ENCODE measurements at regions of chr14 and their contacts with region 1.

Region 1: GRCh38 chr14:68663385-68664076 is 129.3 kb downstream of the ZFP36L1 start:
- DNase-seq: peak; percentile 77
- ATAC-seq: peak; percentile 93
- H3K4me3 ChIP-seq: peak overlapping the region; percentile 39; the same call in 1 of the 2 replicates
- H3K27ac ChIP-seq: peak overlapping the region; percentile 66
- H3K4me1 ChIP-seq: peaks cover 22% of the 10 kb centered on the region
- H3K27me3 ChIP-seq: no peaks in the 10 kb centered on the region
- CTCF ChIP-seq: no peak
- EP300 ChIP-seq: peak; percentile 89 to 98
- POLR2A ChIP-seq: no peak
- RAD21 ChIP-seq: peak; percentile 25; the same call in 1 of the 2 replicates

Region 2: GRCh38 chr14:68495101-68496039 is 168.2 kb before region 1 on chr14:
- CTCF ChIA-PET with region 1: no interaction called
- POLR2A ChIA-PET with region 1: no interaction called
- RAD21 ChIA-PET with region 1: interaction called, 3 read pairs
- SMC1A ChIA-PET with region 1: interaction called, 5 read pairs
- in situ Hi-C with region 1: no loop called
- intact Hi-C with region 1: loop called (anchors 5 kb)
- DNase-seq: peak; percentile 83
- ATAC-seq: peak; percentile 92
- H3K4me3 ChIP-seq: no peak overlapping the region
- H3K27ac ChIP-seq: peak overlapping the region; percentile 68
- H3K4me1 ChIP-seq: peaks cover 24% of the 10 kb centered on the region
- H3K27me3 ChIP-seq: no peaks in the 10 kb centered on the region
- CTCF ChIP-seq: no peak
- EP300 ChIP-seq: peak; percentile 71 to 87; a peak in 2 of 4 replicates
- POLR2A ChIP-seq: no peak
- RAD21 ChIP-seq: 0 out of 2 replicates have a peak, but pooled peaks have one; percentile 8

Region 3: DNA sequence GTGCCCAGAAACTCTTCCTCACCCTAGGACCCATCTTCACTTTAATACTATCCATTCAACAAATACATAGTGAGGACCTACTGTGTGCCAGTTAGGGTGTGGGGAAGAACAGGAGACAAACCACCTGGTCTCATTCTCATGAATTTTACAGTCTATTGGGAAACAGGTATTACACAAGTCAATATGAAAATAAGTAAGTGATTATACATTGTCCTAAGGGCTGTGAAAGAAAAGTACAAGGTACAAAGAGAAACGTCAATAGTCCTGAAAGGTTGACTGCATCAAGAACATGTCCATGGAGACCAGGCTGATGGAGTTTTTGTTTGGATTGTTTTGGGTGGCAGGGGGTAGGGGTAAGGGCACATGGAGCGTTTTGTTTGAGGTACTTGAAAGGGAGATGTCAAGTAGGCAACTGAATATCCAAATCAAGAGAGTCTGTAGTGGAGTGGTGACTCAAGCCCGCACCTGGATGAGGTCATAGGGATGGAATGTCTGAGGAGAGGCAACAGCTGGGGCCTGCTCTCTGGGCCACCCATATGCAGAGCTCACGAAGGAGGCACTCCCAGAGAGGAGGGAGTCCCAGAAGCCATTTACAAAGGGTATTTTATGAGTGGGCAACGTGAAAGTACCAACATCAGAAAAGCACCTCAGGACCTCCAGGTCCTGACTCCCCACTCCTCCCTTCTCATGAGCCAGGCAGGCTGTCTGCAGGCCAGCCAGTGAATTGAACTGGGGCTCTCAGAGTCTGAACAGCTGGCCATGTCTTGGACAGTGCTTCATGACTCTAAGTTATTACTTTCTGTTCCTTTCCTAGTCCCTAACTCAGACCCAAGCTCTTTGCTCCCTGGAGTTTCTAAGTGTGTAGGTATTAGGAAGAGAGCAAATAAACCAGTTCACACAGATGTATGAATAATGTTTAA is 142.6 kb before region 1 on chr14:
- CTCF ChIA-PET with region 1: no interaction called
- POLR2A ChIA-PET with region 1: no interaction called
- RAD21 ChIA-PET with region 1: no interaction called
- SMC1A ChIA-PET with region 1: interaction called, 15 read pairs
- in situ Hi-C with region 1: no loop called
- intact Hi-C with region 1: no loop called
- DNase-seq: no peak
- ATAC-seq: peak; percentile 44
- H3K4me3 ChIP-seq: no peak overlapping the region
- H3K27ac ChIP-seq: no peak overlapping the region
- H3K4me1 ChIP-seq: peaks cover 15% of the 10 kb centered on the region
- H3K27me3 ChIP-seq: no peaks in the 10 kb centered on the region
- CTCF ChIP-seq: no peak
- EP300 ChIP-seq: no peak
- POLR2A ChIP-seq: no peak
- RAD21 ChIP-seq: no peak

Region 4: GRCh38 chr14:68563246-68564131 is 100.0 kb before region 1 on chr14:
- CTCF ChIA-PET with region 1: no interaction called
- POLR2A ChIA-PET with region 1: no interaction called
- RAD21 ChIA-PET with region 1: no interaction called
- SMC1A ChIA-PET with region 1: no interaction called
- in situ Hi-C with region 1: no loop called
- intact Hi-C with region 1: no loop called
- DNase-seq: no peak
- ATAC-seq: no peak
- H3K4me3 ChIP-seq: no peak overlapping the region
- H3K27ac ChIP-seq: no peak overlapping the region
- H3K4me1 ChIP-seq: no peaks in the 10 kb centered on the region
- H3K27me3 ChIP-seq: no peaks in the 10 kb centered on the region
- CTCF ChIP-seq: no peak
- EP300 ChIP-seq: no peak
- POLR2A ChIP-seq: no peak
- RAD21 ChIP-seq: no peak

Region 5: GRCh38 chr14:68680541-68681051 is 17.1 kb after region 1 on chr14:
- CTCF ChIA-PET with region 1: interaction called, 5 read pairs
- POLR2A ChIA-PET with region 1: interaction called, 6 read pairs
- RAD21 ChIA-PET with region 1: interaction called, 16 read pairs
- SMC1A ChIA-PET with region 1: interaction called, 34 read pairs
- in situ Hi-C with region 1: no loop called
- intact Hi-C with region 1: loop called (anchors 1 kb)
- DNase-seq: no peak
- ATAC-seq: no peak
- H3K4me3 ChIP-seq: no peak overlapping the region
- H3K27ac ChIP-seq: no peak overlapping the region
- H3K4me1 ChIP-seq: peaks cover 31% of the 10 kb centered on the region
- H3K27me3 ChIP-seq: no peaks in the 10 kb centered on the region
- CTCF ChIP-seq: no peak
- EP300 ChIP-seq: no peak
- POLR2A ChIP-seq: no peak
- RAD21 ChIP-seq: no peak

Region 6: DNA sequence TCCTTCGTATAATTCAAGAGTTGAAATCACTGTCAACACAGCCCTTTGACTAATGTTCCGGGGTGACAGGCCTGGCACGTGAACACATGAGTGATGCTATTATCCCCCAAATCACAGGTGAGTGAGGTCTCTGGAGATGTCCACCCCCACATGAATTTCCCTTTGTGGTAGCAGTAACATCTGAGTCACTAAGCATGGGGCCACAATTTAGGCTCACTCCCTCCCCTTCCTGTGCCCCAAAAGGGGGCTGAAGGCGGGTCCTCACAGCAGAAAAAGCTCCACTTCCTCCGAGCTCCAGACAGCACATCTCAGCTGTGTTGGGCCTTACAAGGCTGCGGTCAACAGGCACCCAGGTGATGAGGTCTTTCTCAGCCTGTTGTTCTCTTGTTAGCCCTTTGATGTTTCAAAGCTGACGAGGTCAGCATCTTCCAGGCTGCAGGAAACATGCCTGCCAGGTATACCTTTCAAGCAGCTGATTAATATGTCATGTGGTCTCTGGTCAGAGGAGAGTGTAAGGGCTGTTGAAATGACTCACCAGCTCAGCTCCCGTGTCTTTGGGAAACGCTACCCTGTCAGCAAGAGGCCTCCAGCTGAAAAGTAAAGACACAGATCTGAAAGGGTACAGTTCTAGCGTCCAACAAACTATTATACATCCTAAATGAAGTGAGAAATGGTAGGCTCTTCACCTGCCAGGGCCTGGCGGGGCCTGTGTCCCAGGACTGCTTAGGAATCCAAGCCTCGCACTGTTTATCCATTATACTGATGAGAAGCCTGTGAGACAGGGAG is 22.1 kb after region 1 on chr14:
- CTCF ChIA-PET with region 1: interaction called, 4 read pairs
- POLR2A ChIA-PET with region 1: interaction called, 6 read pairs
- RAD21 ChIA-PET with region 1: interaction called, 16 read pairs
- SMC1A ChIA-PET with region 1: interaction called, 34 read pairs
- in situ Hi-C with region 1: no loop called
- intact Hi-C with region 1: loop called (anchors 1 kb)
- DNase-seq: peak; percentile 89
- ATAC-seq: peak; percentile 90
- H3K4me3 ChIP-seq: no peak overlapping the region
- H3K27ac ChIP-seq: peak overlapping the region; percentile 67
- H3K4me1 ChIP-seq: peaks cover 48% of the 10 kb centered on the region
- H3K27me3 ChIP-seq: no peaks in the 10 kb centered on the region
- CTCF ChIP-seq: no peak
- EP300 ChIP-seq: peak in 1 of 2 experiments; percentile 85; a peak in 3 of 4 replicates
- POLR2A ChIP-seq: peak; percentile 62
- RAD21 ChIP-seq: 0 out of 2 replicates have a peak, but pooled peaks have one; percentile 0

Region 7: DNA sequence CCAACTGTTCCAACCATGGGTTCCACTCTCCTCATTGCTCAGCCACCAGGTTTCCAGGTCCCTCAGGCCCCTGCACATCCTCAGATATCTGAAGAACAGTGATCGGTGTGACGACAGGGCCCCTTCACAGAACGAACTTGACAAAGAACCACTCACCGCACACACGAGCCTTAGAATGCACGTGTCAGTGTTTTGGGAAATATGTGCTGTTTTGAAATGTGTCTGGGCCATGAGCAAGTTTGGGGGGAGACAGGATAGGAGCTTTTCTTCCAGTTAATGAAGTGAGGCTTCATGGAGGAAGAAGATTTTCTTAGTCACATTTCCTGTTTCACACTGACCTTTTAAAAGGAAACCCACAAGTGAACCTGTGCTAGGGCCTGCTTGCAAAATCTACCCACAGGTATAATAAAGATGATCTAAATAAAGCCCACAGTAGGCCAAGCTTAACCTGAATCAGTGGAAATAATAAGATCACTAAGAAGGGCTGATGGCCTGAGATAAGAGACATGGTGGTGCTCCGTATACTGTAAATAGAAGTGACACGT is 70.8 kb after region 1 on chr14:
- CTCF ChIA-PET with region 1: interaction called, 5 read pairs
- POLR2A ChIA-PET with region 1: interaction called, 4 read pairs
- RAD21 ChIA-PET with region 1: interaction called, 10 read pairs
- SMC1A ChIA-PET with region 1: interaction called, 3 read pairs
- in situ Hi-C with region 1: no loop called
- intact Hi-C with region 1: no loop called
- DNase-seq: peak; percentile 48
- ATAC-seq: peak; percentile 43
- H3K4me3 ChIP-seq: no peak overlapping the region
- H3K27ac ChIP-seq: no peak overlapping the region
- H3K4me1 ChIP-seq: peaks cover 15% of the 10 kb centered on the region
- H3K27me3 ChIP-seq: no peaks in the 10 kb centered on the region
- CTCF ChIP-seq: no peak
- EP300 ChIP-seq: no peak
- POLR2A ChIP-seq: no peak
- RAD21 ChIP-seq: no peak